ENCODE measurements at regions of chr11 and their contacts with region 1.

Region 1: DNA sequence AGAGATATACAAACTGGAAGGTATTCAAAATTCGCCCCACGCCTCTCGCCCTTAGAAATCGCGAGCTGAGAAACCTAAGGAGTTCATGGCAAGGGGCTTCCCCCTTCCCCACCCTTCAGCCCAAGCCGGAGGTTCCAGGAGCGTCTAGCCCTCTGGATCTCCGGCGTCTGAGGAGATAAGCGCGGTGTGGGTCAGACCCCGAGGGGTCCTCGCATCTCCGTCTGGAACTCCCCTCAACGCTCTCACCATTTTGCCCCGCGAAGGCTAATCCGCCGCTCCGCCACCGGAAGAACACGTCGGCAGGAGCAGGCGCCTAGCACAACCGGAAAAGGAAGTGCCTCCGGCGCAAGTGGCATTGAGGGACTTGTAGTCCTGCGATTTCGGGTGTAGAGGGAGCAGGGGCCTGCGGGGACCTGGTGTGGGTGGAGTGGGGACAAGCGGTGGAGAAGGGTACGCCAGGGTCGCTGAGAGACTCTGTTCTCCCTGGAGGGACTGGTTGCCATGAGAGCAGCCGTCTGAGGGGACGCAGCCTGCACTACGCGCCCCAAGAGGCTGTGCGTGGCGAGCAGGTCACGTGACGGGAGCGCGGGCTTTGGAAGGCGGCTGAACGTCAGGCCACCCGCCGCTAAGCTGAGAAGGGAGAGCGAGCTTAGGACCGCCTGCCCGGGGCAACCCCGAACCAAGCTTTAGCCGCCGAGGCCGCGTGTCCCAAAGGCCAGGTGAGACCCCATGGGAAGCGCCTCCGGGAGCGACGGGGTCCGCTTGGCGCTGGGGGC is at the starts of genes FEN1 and TMEM258:
- DNase-seq: peak; percentile 86
- H3K4me3 Mint-ChIP-seq: peak within 1 kb of the TSS; percentile 96
- H3K27ac Mint-ChIP-seq: peak within 1 kb of the TSS; percentile 99
- H3K4me1 Mint-ChIP-seq: peaks cover 58% of the 10 kb centered on the region
- H3K27me3 Mint-ChIP-seq: no peaks in the 10 kb centered on the region
- total RNA-seq, gene FEN1: 147 and 149 TPM in 2 replicates
- total RNA-seq, gene TMEM258: 164 and 166 TPM in 2 replicates

Region 2: DNA sequence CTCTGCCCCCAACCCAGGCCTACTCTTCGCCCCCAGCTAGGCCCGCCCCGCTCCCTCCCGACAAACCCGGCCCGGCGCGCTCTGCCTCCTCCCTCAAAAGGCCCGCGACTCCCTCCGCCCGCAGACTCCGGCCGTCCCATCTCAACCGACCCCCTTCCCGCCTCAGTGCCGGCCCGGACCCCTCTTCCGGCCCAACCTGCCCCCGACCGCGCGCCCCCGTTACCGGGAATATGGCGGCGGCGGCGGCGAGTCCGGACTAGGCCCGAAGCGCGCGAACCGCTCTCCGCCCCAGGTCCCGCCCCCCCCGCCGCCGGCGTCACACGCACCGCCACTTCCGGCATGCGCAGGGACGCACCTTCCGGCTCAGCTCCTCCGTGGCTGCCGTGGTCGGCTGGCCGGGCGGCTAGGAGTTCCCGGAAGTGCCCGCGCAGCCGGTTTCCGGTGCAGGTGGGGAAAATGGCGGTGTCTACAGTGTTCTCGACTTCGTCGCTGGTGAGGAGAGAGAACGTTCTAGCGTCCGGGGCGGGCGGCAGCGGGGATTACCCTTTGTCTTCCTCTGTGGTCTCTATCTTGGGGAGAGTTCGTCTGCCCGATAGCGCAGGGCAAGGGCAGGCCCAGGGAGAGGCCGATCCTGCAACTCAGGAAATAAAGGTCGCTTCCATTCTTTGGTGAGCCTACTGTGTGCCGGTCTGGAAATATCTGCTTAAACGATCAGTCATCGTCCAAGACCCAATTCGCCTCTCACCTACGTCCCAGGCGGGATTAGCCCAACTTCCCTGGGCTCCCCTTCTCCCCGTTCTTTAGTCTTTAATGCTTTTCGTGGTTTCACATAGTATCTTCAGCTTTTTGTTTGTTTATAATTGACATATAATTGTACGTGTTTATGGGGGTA is 362.6 kb before region 1 on chr11 and contains the starts of genes CPSF7 and SDHAF2:
- intact Hi-C with region 1: loop called (anchors 5 kb)
- DNase-seq: peak; percentile 98
- H3K4me3 Mint-ChIP-seq: peak within 1 kb of the TSS; percentile 91
- H3K27ac Mint-ChIP-seq: peak within 1 kb of the TSS; percentile 97
- H3K4me1 Mint-ChIP-seq: peaks cover 61% of the 10 kb centered on the region
- H3K27me3 Mint-ChIP-seq: no peaks in the 10 kb centered on the region
- total RNA-seq, gene CPSF7: 141 and 148 TPM in 2 replicates
- total RNA-seq, gene SDHAF2: 49.5 and 58.1 TPM in 2 replicates

Region 3: GRCh38 chr11:61728940-61729219 is 63.6 kb before region 1 on chr11:
- intact Hi-C with region 1: no loop called
- DNase-seq: no peak
- H3K4me3 Mint-ChIP-seq: no peak overlapping the region
- H3K27ac Mint-ChIP-seq: no peak overlapping the region
- H3K4me1 Mint-ChIP-seq: peaks cover 4% of the 10 kb centered on the region
- H3K27me3 Mint-ChIP-seq: peaks cover 3% of the 10 kb centered on the region

Region 4: GRCh38 chr11:61816736-61817455 is 24.4 kb after region 1 on chr11 and contains the start of gene FADS1:
- intact Hi-C with region 1: loop called (anchors 1 kb)
- DNase-seq: peak; percentile 83
- H3K4me3 Mint-ChIP-seq: peak within 1 kb of the TSS; percentile 95
- H3K27ac Mint-ChIP-seq: peak within 1 kb of the TSS; percentile 97
- H3K4me1 Mint-ChIP-seq: peaks cover 22% of the 10 kb centered on the region
- H3K27me3 Mint-ChIP-seq: no peaks in the 10 kb centered on the region
- total RNA-seq, gene FADS1: 92.3 and 97.7 TPM in 2 replicates

Region 5: DNA sequence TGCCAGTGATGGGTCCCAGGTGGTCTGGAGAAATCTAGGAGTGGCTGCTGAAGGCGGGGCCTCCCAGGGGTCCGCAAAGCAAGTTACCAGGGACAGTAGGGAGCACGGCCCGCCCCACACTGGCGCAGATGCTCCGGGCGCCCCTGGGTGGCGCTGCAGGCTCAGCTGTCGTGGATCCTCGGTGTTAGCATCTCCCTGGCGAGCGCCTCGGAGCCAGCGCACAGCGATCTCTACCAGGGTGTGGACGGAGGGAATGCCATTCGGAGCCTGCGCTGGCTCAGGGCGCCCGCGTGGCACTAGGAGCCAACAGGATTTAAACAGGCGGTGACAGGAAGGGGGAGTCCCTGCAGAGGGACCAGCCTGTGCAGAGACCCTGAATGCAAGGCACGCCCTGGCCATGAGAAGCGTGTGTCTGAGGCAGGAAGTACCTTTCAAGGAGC is 78.7 kb after region 1 on chr11:
- intact Hi-C with region 1: loop called (anchors 1 kb)
- DNase-seq: peak; percentile 60
- H3K4me3 Mint-ChIP-seq: peak overlapping the region; percentile 49
- H3K27ac Mint-ChIP-seq: no peak overlapping the region
- H3K4me1 Mint-ChIP-seq: peaks cover 6% of the 10 kb centered on the region
- H3K27me3 Mint-ChIP-seq: no peaks in the 10 kb centered on the region

Region 6: GRCh38 chr11:61947486-61948210 is 155.2 kb after region 1 on chr11:
- intact Hi-C with region 1: loop called (anchors 1 kb)
- DNase-seq: peak; percentile 46
- H3K4me3 Mint-ChIP-seq: no peak overlapping the region
- H3K27ac Mint-ChIP-seq: no peak overlapping the region
- H3K4me1 Mint-ChIP-seq: no peaks in the 10 kb centered on the region
- H3K27me3 Mint-ChIP-seq: peaks cover 7% of the 10 kb centered on the region

Region 7: DNA sequence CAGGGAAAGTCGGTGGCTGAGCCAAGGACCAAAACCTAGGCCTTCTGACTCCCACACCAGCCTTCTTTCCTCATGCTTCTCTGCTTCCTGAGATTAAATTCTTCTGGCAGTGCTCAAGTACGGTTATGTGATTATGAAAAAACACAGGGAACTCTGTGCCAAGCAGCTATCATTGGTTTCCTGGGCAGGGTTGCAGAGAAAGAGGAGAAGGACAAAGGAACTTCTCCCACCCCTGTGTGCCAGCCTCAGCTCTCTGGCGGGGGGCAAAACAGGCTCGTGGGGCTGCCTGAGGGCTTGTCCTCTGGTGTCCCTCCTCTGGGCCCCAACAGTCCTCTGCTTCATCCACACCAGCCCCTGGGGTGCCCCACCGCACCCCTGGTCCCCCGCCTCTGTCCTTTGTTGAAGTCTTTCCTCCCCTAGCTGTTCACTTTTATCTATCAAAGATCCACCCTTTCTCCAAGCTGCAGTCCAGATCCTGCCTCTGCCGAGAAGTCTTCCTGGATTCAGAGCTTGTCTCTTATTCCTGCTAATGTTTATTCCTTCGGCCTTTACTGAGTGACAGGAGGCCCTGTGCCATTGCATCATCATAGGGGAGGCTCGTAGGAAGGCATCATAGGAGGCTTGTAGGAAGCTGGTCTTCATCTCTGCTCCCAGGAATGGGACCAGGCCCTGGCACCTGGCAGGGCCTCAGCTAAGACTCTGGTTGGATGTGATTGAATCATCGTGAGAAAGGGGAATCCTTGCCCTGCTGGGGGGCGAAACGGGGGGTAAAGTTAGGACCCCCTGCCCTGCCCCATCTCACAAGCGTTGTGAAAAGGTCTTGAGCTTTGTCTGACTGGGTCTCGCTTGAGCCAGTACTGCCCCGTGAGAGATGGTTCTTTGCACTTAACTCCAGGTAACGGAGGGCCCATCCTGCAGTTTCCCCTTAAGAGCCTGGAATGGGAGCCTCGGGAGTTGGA is 186.5 kb after region 1 on chr11:
- intact Hi-C with region 1: no loop called
- DNase-seq: no peak
- H3K4me3 Mint-ChIP-seq: no peak overlapping the region
- H3K27ac Mint-ChIP-seq: no peak overlapping the region
- H3K4me1 Mint-ChIP-seq: peaks cover 17% of the 10 kb centered on the region
- H3K27me3 Mint-ChIP-seq: no peaks in the 10 kb centered on the region

Region 8: DNA sequence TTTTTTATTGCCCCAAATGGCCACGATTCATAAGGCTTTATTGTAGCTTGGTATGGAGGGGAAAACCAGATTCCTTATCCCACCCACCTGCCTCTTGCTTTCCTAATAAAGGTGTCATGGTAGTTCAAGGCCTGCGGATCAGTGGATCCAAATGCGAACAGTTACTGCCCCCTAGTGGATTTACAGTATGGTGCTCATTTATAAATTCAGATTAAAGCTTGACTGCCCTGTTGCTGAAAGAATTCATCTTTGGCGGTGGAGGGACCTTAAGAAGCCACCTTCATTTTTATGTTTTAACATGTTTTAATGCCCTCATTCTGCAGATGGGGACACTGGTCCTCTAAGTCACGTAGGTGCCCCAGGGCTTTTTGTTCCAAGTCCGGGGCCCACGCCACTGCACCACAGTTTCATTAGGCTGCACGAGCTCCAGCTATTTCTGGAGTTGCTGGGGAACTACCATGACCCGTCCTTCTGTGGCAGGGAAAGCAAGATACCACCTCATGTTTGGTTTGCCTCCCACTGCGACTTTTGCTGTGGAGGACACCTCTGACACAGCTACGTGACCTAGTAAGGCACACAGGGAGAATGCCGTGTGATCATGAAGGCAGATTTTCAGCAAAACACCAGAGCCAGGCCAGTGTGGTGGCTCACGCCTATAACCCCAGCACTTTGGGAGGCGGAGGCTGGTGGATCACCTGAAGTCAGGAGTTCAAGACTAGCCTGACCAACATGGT is 315.7 kb after region 1 on chr11:
- intact Hi-C with region 1: loop called (anchors 1 kb)
- DNase-seq: peak; percentile 12
- H3K4me3 Mint-ChIP-seq: no peak overlapping the region
- H3K27ac Mint-ChIP-seq: no peak overlapping the region
- H3K4me1 Mint-ChIP-seq: peaks cover 13% of the 10 kb centered on the region
- H3K27me3 Mint-ChIP-seq: peaks cover 4% of the 10 kb centered on the region